ENCODE measurements at regions of chr9 and their contacts with region 1.

Region 1: DNA sequence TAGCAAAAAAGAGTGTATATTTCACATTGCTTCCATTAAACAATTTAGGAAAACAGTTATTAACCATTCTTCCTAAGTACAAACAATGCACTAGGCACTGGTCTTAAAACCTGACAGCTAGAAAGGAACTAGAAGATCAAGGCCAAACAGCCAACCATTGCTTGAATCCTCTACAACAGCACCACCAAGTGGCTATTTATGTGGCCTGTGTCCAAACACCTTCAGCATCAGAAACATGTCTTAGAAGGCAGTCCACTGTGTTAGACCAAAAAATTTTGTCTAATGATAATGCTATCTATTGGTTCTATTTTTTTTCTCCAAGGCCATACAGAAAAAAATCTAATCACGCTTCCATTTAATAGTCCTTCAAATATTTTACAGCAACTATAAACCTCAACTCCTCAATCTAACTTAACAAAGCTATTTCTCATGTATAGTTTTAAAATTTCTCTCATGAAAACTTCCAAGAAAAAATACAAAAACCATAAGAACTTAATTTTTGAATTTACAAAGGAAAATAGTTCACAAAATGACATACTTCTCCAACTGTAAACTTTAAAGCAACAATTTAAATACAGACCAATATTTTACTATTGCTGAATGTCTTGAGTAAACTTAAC is 36.1 kb downstream of the CAAP1 start:
- DNase-seq: peak; percentile 12 to 29
- H3K4me3 ChIP-seq: no peak overlapping the region
- H3K4me3 Mint-ChIP-seq: no peak overlapping the region
- H3K27ac Mint-ChIP-seq: no peak overlapping the region
- H3K4me1 ChIP-seq: no peaks in the 10 kb centered on the region
- H3K4me1 Mint-ChIP-seq: no peaks in the 10 kb centered on the region
- H3K27me3 ChIP-seq: no peaks in the 10 kb centered on the region
- H3K27me3 Mint-ChIP-seq: no peaks in the 10 kb centered on the region
- CTCF ChIP-seq: peak; percentile 18 to 21

Region 2: GRCh38 chr9:26744191-26744965 is 112.1 kb before region 1 on chr9:
- CTCF ChIA-PET with region 1: no interaction called
- POLR2A ChIA-PET with region 1: no interaction called
- intact Hi-C with region 1: loop called (anchors 1 kb)
- DNase-seq: no peak
- H3K4me3 ChIP-seq: no peak overlapping the region
- H3K4me3 Mint-ChIP-seq: no peak overlapping the region
- H3K27ac Mint-ChIP-seq: no peak overlapping the region
- H3K4me1 ChIP-seq: no peaks in the 10 kb centered on the region
- H3K4me1 Mint-ChIP-seq: no peaks in the 10 kb centered on the region
- H3K27me3 ChIP-seq: no peaks in the 10 kb centered on the region
- H3K27me3 Mint-ChIP-seq: peaks cover 6% of the 10 kb centered on the region
- CTCF ChIP-seq: peak in 1 of 2 experiments; percentile 34

Region 3: DNA sequence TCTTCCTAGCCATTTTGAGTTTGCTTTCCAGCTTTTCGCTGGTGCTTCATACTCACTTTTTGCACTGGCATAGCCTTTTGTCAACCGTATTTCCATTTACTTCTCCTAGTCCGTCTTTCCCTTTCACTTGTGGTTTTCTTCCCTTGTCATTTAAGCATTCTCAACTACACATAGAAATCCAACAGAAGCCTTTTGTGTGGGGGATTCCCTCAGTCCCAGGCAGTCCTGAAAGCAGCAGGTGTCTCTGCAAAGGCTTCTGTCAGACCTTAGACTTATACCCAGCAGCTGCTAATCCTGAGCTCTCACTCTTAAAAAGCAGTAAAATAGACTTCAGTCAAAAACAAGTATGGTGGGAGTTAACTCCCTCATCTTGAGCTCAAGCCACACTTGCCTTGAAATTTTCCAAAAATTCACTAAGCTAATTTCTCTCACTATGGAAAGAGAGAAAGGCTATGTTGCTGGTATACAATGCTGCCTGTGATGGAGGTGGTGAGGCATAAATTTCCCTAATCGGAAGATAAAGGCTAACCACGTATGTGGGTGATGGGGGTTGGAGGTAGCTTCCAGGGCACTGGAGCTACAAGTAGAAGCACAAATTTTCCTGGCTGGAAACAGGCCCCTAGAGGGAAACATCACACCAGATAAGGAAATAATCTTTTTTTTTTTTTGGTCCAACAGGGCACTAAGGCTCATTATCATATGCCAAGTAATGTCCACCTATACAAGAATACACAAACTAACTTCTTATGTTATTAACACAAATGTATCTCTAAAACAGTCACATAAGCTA is 632.8 kb after region 1 on chr9:
- CTCF ChIA-PET with region 1: no interaction called
- POLR2A ChIA-PET with region 1: no interaction called
- intact Hi-C with region 1: no loop called
- DNase-seq: no peak
- H3K4me3 ChIP-seq: no peak overlapping the region
- H3K4me3 Mint-ChIP-seq: no peak overlapping the region
- H3K27ac Mint-ChIP-seq: no peak overlapping the region
- H3K4me1 ChIP-seq: 0 out of 2 replicates have a peak, but pooled peaks cover 5% of the 10 kb centered on the region
- H3K4me1 Mint-ChIP-seq: peaks cover 14% of the 10 kb centered on the region
- H3K27me3 ChIP-seq: no peaks in the 10 kb centered on the region
- H3K27me3 Mint-ChIP-seq: no peaks in the 10 kb centered on the region
- CTCF ChIP-seq: no peak

Measured in Caco-2 (cell line).